ENCODE measurements at regions of chr17 and their contacts with region 1.

Region 1: DNA sequence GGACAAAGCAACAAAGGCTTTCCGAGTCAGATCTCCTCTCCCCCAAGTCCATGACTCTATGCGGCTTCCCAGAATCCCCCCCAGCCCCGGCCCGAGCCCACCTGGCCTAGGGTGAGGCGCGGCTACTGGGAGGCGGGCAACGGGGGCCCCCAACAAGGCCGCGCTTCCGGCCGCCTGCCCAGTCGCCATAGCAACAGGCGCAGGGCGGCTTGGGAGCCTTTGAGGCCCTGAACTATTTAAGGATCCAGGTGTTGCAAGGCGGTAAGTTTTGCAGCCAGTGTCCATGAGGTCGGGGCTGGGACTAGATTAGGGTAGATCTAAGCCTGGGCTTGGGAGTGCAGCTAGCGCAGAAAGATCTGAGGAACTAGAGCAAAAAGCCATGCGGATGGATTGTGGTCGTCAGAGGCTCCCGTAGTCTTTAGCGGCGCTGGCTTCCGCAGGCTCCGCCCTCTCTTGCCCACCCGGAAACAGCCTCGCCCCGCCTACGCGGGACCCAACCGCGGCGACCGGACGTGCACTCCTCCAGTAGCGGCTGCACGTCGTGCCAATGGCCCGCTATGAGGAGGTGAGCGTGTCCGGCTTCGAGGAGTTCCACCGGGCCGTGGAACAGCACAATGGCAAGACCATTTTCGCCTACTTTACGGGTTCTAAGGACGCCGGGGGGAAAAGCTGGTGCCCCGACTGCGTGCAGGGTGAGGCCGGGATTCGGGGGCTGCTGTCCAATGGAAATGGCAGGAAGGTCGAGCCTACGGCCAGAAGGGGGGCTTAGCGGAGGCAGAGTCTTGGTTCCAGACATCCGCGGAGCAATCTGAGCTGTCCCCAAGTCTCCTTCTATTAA is at the starts of genes KIAA0753 and TXNDC17:
- DNase-seq: peak; percentile 90
- ATAC-seq: peak; percentile 93
- H3K4me3 ChIP-seq: peak within 1 kb of the TSS; percentile 81
- H3K27ac ChIP-seq: peak within 1 kb of the TSS; percentile 93
- H3K4me1 ChIP-seq: peaks cover 9% of the 10 kb centered on the region
- H3K27me3 ChIP-seq: no peaks in the 10 kb centered on the region
- CTCF ChIP-seq: no peak
- POLR2A ChIP-seq: peak; percentile 97
- RAD21 ChIP-seq: no peak; the same call in 1 of the 2 replicates
- total RNA-seq, gene KIAA0753: 17.6 and 18.3 TPM in 2 replicates
- total RNA-seq, gene TXNDC17: 45.0 and 174 TPM in 2 replicates

Region 2: DNA sequence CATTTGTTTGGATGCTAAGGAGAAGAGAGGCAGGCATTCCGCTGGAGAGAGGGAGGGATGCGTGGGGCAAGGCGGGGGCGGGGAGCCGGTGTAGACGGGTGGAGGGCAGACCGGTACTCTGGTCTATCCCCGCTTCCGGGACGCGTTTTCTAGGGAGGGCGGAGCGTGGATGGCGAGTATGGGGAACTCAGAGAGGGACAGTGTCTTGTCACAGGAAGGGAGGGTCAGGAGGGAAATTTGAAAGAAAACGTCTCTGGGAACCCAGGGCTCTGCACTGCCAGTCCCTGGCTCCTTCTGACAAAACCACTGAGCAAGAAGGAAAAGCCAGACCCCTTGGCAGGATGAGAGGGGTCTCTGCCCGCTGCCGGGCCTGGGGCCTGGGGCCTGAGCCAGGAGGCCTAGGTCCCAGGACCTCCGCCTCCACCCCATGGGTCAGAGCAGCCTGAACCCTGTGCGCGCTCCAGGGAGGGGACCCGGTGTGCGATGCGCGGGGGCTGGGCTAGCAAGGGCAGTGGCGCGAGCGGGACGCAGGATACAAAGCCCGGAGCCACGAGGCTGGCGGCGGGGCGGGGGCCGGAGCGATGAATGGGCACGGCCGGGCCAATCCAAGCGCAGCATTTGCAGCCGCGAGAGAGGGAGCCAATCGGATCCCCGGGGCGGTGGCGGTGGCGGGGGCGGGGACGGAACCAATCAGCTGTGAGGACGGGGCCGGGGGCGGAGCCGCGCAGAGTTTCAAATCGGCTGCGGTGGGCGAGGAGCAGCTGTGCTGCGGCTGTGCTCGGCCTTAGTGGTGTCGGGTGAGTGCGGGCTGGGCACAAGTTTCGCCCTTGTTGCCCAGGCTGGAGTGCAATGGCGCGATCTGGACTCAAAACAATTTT is 196.8 kb before region 1 on chr17 and contains the start of gene PIMREG:
- CTCF ChIA-PET with region 1: no interaction called
- POLR2A ChIA-PET with region 1: no interaction called
- dilution Hi-C with region 1: no loop called
- in situ Hi-C with region 1: no loop called
- intact Hi-C with region 1: loop called (anchors 5 kb)
- DNase-seq: peak; percentile 88
- ATAC-seq: peak; percentile 97
- H3K4me3 ChIP-seq: peak within 1 kb of the TSS; percentile 57
- H3K27ac ChIP-seq: peak within 1 kb of the TSS; percentile 76
- H3K4me1 ChIP-seq: peaks cover 3% of the 10 kb centered on the region; the same call in 1 of the 2 replicates
- H3K27me3 ChIP-seq: no peaks in the 10 kb centered on the region
- CTCF ChIP-seq: no peak
- POLR2A ChIP-seq: 0 out of 2 replicates have a peak, but pooled peaks have one; percentile 40
- RAD21 ChIP-seq: no peak
- total RNA-seq, gene PIMREG: 19.4 and 21.5 TPM in 2 replicates

Region 3: DNA sequence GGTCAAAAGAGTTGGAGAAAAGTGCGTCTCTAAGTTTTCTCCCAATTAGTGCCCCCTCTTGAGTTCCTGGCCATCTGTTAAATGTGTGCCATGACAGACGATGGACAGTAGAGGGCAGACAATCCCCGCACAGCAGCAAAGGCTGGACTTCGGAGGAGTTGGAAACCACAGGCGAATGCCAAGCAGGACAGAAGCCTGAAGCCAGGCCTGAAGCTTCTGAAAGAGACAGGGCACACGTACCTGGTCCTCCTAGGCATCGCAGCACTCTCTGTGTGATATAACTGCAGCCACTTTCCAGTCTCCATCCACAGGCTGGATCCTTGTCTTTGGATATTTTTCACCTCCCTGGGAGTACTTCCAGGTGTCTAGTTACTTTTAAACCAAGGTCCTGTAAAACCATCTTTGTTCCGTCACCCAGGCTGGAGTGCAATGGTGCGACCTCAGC is 25.3 kb after region 1 on chr17:
- CTCF ChIA-PET with region 1: no interaction called
- POLR2A ChIA-PET with region 1: no interaction called
- dilution Hi-C with region 1: no loop called
- in situ Hi-C with region 1: no loop called
- intact Hi-C with region 1: no loop called
- DNase-seq: peak; percentile 79
- ATAC-seq: peak; percentile 100
- H3K4me3 ChIP-seq: no peak overlapping the region
- H3K27ac ChIP-seq: no peak overlapping the region
- H3K4me1 ChIP-seq: no peaks in the 10 kb centered on the region
- H3K27me3 ChIP-seq: peaks cover 29% of the 10 kb centered on the region
- CTCF ChIP-seq: peak; percentile 97
- POLR2A ChIP-seq: no peak; the same call in 1 of the 2 replicates
- RAD21 ChIP-seq: peak; percentile 98

Region 4: DNA sequence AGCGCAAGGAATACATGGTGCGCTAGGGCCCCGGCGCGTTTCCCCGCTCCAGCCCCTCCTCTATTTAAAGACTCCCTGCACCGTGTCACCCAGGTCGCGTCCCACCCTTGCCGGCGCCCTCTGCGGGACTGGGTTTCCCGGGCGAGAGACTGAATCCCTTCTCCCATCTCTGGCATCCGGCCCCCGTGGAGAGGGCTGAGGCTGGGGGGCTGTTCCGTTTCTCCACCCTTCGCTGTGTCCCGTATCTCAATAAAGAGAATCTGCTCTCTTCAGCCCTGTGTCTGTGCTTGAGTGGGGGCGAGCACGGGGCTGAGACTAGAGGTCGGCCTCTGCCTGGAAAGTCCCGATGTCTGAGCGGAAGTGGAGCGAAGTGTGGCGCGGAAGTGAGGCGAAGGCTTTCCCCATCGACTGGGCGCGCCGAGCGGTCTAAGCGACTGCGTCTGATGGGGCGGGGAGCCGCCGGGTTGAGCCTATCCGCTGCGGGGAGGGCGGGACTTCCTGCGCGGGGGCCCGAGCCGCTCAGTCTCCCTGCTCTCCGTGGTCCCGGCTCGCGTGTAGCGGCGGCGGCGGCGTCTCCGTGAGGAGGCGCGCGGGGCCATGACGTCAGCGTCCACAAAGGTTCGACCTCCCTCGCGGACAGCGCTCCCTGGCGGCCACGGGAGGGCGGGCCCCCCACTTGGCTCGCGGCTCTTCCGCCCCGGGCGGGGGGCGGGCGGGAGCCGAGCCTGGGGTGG is 373.7 kb after region 1 on chr17:
- CTCF ChIA-PET with region 1: no interaction called
- POLR2A ChIA-PET with region 1: no interaction called
- dilution Hi-C with region 1: no loop called
- in situ Hi-C with region 1: no loop called
- intact Hi-C with region 1: no loop called
- DNase-seq: peak; percentile 96
- ATAC-seq: peak; percentile 90
- H3K4me3 ChIP-seq: peak overlapping the region; percentile 72
- H3K27ac ChIP-seq: peak overlapping the region; percentile 94
- H3K4me1 ChIP-seq: peaks cover 3% of the 10 kb centered on the region; the same call in 1 of the 2 replicates
- H3K27me3 ChIP-seq: no peaks in the 10 kb centered on the region
- CTCF ChIP-seq: peak; percentile 79
- POLR2A ChIP-seq: peak; percentile 80
- RAD21 ChIP-seq: no peak; the same call in 1 of the 2 replicates

Measured in IMR-90 (cell line).